Ascending aorta (tissue), 2 donors: ENCODE measurements at regions of chr3 and their contacts with region 1.

Region 1: DNA sequence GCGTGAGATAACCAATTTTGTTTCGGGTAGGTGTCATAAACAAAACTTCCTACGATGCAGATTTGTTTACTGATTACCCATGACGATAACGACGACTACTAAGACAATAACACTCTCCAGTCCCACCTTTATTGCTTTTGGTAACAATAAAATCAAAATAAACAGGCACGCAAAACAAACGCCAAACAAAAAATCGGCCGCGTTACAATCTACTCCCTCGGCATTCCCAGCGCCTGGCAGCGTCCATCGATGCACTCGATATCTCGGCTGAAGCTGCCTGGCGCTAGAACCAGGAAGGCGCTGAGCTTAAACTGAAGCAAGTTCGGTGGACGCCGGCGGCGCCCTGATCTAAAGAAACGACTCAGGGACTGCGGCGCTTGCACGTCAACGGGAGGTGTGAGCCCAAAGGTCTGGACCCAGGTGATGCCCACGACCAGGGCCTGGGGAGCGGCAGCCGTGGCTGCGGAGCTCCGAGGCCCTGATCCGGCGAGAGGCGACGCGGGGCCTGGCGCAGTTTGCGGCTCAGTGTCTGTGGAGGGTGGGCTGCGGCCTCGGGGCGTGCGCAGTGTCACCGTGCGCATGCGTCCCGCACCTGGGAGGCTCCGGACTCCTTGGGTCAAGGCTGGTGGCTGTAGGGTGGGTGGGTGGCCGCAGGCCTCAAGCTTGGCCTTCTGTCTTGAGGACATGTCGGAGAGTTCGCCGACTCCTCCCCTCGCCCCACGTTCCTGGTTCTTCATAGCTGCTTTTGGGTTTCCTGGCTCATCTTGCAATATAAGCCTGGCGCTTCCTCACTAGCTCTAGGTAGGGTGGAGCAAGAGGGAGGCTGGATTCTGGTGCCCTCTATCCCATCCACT is at the start of gene RSRC1:
- DNase-seq: peak; percentile 44 to 88
- H3K4me3 ChIP-seq: peak within 1 kb of the TSS; percentile 80 to 99
- H3K27ac ChIP-seq: peak within 1 kb of the TSS in 1 of 2 donors; percentile 76
- H3K4me1 ChIP-seq: peaks cover 6 to 13% of the 10 kb centered on the region in 2 donors
- H3K27me3 ChIP-seq: peaks cover 6% of the 10 kb centered on the region
- CTCF ChIP-seq: no peak
- total RNA-seq, gene RSRC1: 28.0 TPM

Region 2: DNA sequence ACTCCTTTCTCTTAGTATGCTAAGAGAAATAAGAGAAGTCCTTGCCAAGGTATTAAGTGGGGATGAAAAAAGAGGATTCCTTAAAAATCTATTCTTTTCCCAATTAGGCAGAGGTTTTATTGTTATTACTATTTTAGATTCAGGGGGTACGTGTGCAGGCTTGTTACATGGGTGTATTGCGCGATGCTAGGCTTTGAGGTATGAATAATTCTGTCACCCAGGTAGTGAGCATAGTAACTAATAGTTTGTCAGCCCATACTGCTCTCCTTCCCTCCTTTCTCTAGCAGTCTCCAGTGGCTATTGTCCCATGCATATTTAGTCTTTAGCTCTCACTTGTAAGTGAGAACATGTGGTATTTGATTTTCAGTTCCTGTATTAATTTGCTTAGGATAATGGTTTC is 1200.0 kb before region 1 on chr3:
- intact Hi-C with region 1: no loop called
- DNase-seq: no peak
- H3K4me3 ChIP-seq: no peak overlapping the region
- H3K27ac ChIP-seq: no peak overlapping the region
- H3K4me1 ChIP-seq: no peaks in the 10 kb centered on the region
- H3K27me3 ChIP-seq: no peaks in the 10 kb centered on the region
- CTCF ChIP-seq: no peak

Region 3: GRCh38 chr3:157174649-157175498 is 935.2 kb before region 1 on chr3:
- intact Hi-C with region 1: loop called (anchors 10 kb)
- DNase-seq: peak; percentile 94 to 99
- H3K4me3 ChIP-seq: peak overlapping the region; percentile 75 to 76
- H3K27ac ChIP-seq: peak overlapping the region; percentile 96 to 98
- H3K4me1 ChIP-seq: peaks cover 0 to 17% of the 10 kb centered on the region in 2 donors
- H3K27me3 ChIP-seq: no peaks in the 10 kb centered on the region
- CTCF ChIP-seq: no peak

Region 4: DNA sequence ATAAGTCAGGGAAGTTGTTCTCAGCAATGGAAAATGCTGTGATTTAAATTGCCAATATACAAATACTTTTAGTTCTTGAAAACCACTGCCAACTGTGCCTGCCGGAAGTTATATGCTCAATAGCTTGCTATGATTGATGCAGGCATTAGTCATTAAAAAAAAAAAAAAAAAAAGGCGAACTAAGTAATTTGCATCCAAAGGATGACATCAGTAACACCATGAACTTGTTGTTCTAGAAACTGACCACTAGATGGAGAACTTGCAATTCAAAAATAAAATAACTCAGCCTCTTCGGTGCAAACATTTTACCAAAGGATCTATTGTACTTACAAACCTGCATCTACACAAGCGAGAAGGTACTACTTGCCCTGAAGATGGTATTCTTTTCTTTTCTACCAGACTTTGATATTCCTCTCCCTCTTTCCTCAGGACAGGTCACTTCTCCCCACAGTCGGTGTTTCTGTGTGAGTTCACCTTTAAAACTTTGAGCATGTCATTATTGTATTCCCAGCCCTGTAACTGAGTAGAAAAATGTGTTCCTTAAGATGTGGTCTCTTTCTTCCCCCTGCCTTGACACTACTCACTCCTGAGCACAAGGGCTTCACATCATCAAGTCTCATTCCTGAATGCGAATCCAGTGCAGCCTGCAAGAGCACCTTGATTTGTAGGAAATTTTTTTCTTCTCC is 491.8 kb before region 1 on chr3:
- intact Hi-C with region 1: loop called (anchors 5 kb)
- DNase-seq: no peak
- H3K4me3 ChIP-seq: no peak overlapping the region
- H3K27ac ChIP-seq: no peak overlapping the region
- H3K4me1 ChIP-seq: no peaks in the 10 kb centered on the region
- H3K27me3 ChIP-seq: no peaks in the 10 kb centered on the region
- CTCF ChIP-seq: peak; percentile 56 to 69 (median 58)

Region 5: DNA sequence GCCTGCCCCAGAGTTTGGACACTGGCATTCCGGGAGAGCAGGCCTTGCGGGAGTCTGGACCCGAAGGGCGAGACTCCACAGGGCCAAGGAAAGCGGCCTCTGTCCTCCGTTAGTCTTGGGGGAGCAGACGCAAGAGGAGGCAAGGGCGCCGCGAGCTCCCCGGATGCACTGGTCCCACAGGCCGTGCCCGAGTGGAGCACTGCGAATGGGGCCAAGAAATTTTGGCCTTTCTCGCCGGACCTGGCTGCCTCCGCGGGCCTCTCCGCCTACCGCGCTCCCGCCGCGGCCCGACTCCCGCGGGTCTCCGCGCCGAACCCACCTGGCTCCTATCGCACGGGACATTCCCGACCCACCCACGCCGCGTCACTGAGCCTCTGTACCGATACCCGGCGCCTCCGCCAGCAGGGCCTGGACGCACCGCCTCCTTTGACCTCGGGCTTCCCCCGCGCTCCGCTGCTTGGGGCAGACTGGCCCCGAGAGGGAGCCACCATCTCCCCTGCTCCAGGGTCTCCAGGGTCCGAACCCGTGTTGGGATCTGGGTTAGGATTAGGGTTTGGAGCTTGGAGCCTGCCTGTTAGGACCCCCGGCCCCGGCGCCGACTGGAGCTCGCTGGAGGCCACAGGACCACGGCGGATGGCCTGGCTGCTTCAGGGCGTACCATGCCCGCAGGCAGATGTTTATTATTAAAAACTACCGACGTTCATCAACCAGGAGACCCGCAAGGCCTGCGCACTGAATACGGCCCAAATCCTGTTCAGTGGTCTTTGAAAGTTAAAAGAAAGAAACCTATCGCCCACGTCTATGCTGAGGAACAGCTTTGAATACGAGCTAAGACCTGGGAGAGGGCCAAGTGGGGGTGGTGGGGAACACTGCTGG is 15.6 kb before region 1 on chr3:
- intact Hi-C with region 1: loop called (anchors 2 kb)
- DNase-seq: no peak
- H3K4me3 ChIP-seq: no peak overlapping the region
- H3K27ac ChIP-seq: no peak overlapping the region
- H3K4me1 ChIP-seq: peaks cover 7 to 8% of the 10 kb centered on the region in 2 donors
- H3K27me3 ChIP-seq: peaks cover 15% of the 10 kb centered on the region
- CTCF ChIP-seq: no peak

Region 6: DNA sequence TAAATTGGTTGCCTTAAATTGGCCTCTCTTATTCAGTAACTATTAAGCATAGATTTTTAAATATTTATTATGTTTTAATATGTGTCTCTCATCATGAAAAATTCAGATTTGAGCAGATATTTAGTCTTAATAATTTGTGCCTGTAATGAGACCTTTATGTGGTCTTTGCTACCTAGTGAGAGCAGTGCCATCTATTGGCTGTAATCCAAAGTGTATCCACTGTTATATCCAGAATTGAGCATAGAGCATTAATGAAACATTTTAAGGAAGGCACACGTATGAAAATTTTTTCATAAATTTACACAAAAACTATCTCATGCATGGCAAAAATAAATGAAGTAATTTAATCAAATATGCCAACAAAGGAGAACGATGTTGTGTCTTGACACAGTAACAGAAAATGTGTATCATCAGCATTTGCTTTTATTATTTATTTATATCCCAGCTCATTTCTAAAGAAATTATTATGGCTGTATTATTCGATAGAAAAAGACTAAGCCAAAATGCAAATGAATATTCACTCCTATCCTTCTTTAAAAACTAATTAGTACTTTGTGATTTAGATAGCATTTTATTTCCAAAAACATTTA is 203.4 kb after region 1 on chr3:
- intact Hi-C with region 1: no loop called
- DNase-seq: no peak
- H3K4me3 ChIP-seq: no peak overlapping the region
- H3K27ac ChIP-seq: no peak overlapping the region
- H3K4me1 ChIP-seq: no peaks in the 10 kb centered on the region
- H3K27me3 ChIP-seq: no peaks in the 10 kb centered on the region
- CTCF ChIP-seq: no peak

Region 7: GRCh38 chr3:158570999-158571974 is 461.3 kb after region 1 on chr3 and contains the start of gene MLF1:
- intact Hi-C with region 1: loop called (anchors 5 kb)
- DNase-seq: peak; percentile 85 to 98
- H3K4me3 ChIP-seq: peak within 1 kb of the TSS; percentile 65 to 88
- H3K27ac ChIP-seq: peak within 1 kb of the TSS; percentile 55 to 60
- H3K4me1 ChIP-seq: peaks cover 0 to 3% of the 10 kb centered on the region in 2 donors
- H3K27me3 ChIP-seq: no peaks in the 10 kb centered on the region
- CTCF ChIP-seq: no peak
- total RNA-seq, gene MLF1: 3.3 TPM

Region 8: GRCh38 chr3:158644345-158644908 is 534.4 kb after region 1 on chr3 and contains the start of gene GFM1:
- intact Hi-C with region 1: loop called (anchors 5 kb)
- DNase-seq: peak; percentile 64 to 97
- H3K4me3 ChIP-seq: peak within 1 kb of the TSS; percentile 67 to 80
- H3K27ac ChIP-seq: peak within 1 kb of the TSS; percentile 75 to 94
- H3K4me1 ChIP-seq: peaks cover 0 to 11% of the 10 kb centered on the region in 2 donors
- H3K27me3 ChIP-seq: no peaks in the 10 kb centered on the region
- CTCF ChIP-seq: peak; percentile 65 to 95 (median 92)
- total RNA-seq, gene GFM1: 13.9 TPM